ENCODE measurements at regions of chr11 and their contacts with region 1.

Region 1: GRCh38 chr11:72722050-72722748 is 30.0 kb downstream of the ARAP1 start:
- DNase-seq: peak; percentile 76 to 91
- ATAC-seq: peak; percentile 82 to 84
- H3K4me3 ChIP-seq: peak overlapping the region; percentile 58 to 75 (median 70)
- H3K27ac ChIP-seq: peak overlapping the region; percentile 88 to 97 (median 90)
- H3K4me1 ChIP-seq: peaks cover 45 to 48% of the 10 kb centered on the region in 2 donors
- H3K27me3 ChIP-seq: no peaks in the 10 kb centered on the region
- CTCF ChIP-seq: no peak
- POLR2A ChIP-seq: peak; percentile 48 to 61

Region 2: GRCh38 chr11:72781313-72782050 is 59.3 kb after region 1 on chr11:
- in situ Hi-C with region 1: loop called in 2 of 4 experiments (anchors 5 to 10 kb)
- intact Hi-C with region 1: no loop called
- DNase-seq: no peak
- ATAC-seq: peak; percentile 59 to 63
- H3K4me3 ChIP-seq: peak overlapping the region; percentile 69 to 92 (median 78)
- H3K27ac ChIP-seq: peak overlapping the region in 3 of 4 donors; percentile 48 to 63 (median 52)
- H3K4me1 ChIP-seq: peaks cover 19 to 25% of the 10 kb centered on the region in 2 donors
- H3K27me3 ChIP-seq: no peaks in the 10 kb centered on the region
- CTCF ChIP-seq: no peak
- POLR2A ChIP-seq: no peak

Region 3: DNA sequence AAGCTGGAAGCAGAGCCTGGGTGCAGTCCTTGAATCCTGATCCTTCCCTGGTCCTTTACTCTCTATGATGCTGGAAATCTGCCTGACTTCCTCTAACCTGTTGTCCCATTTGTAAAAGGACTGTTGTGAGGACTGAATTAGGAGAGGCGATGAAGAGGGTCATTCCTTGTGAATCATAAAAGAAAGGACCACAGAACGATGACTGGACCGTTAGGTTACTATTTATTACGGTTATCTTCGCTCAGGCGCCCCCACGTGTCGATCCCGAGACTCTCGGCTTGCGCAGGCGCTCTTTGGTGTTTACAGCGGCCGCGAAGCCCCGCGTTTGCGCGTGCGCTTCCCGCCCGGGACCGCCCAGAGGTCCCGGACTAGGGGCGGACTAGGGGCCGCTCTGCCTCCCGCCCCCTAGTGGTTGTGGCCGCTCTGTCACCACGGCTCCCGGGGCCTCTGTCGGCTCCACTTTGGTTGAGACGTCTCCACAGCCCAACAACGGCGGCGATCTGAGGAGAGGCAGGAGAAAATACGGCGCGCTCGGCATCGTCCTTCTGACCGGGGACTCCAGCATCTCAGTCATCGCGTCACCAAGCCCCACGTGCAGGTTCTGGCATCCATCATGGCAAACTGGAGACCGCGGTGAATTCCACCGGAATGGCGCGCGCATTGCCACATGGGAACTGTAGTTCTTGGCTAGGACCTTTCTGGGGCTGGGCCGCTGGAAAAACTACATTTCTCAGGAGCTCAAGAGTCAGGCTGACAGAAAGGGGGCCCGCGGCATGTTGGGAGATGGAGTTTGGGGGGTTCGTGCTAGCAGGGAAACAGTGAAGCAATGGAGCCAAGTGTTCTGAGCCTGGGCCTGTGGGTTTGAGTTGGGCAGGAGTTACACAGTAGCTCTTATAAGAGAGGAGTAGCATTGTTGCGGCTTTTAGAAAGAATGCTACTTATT is 71.5 kb after region 1 on chr11 and contains the start of gene STARD10:
- in situ Hi-C with region 1: loop called in 3 of 4 experiments (anchors 5 to 10 kb)
- intact Hi-C with region 1: loop called (anchors 1 kb)
- DNase-seq: peak; percentile 89 to 92
- ATAC-seq: peak; percentile 92 to 93
- H3K4me3 ChIP-seq: peak within 1 kb of the TSS; percentile 64 to 86 (median 75)
- H3K27ac ChIP-seq: peak within 1 kb of the TSS; percentile 87 to 98 (median 96)
- H3K4me1 ChIP-seq: peaks cover 20 to 29% of the 10 kb centered on the region in 2 donors
- H3K27me3 ChIP-seq: no peaks in the 10 kb centered on the region
- CTCF ChIP-seq: peak; percentile 98 to 100 (median 99)
- POLR2A ChIP-seq: peak in 1 of 2 donors; percentile 69
- total RNA-seq, gene STARD10: 39.1 to 103 (median 71.1) TPM

Region 4: GRCh38 chr11:72814286-72815109 is 92.3 kb after region 1 on chr11 and contains the start of gene ATG16L2:
- in situ Hi-C with region 1: no loop called
- intact Hi-C with region 1: loop called (anchors 2 kb)
- DNase-seq: peak; percentile 71 to 78
- ATAC-seq: peak; percentile 88 to 90
- H3K4me3 ChIP-seq: peak within 1 kb of the TSS; percentile 75 to 100 (median 94)
- H3K27ac ChIP-seq: peak within 1 kb of the TSS; percentile 88 to 100 (median 94)
- H3K4me1 ChIP-seq: peaks cover 13 to 26% of the 10 kb centered on the region in 2 donors
- H3K27me3 ChIP-seq: no peaks in the 10 kb centered on the region
- CTCF ChIP-seq: peak; percentile 7 to 69 (median 33)
- POLR2A ChIP-seq: peak; percentile 65 to 70
- total RNA-seq, gene ATG16L2: 3.1 to 8.1 (median 4.3) TPM

Region 5: GRCh38 chr11:73177778-73178577 is 455.8 kb after region 1 on chr11:
- in situ Hi-C with region 1: loop called in 2 of 4 experiments (anchors 10 to 25 kb)
- intact Hi-C with region 1: loop called (anchors 2 kb)
- DNase-seq: peak; percentile 56 to 72
- ATAC-seq: peak; percentile 64 to 71
- H3K4me3 ChIP-seq: no peak overlapping the region
- H3K27ac ChIP-seq: peak overlapping the region; percentile 29 to 63 (median 46)
- H3K4me1 ChIP-seq: peaks cover 16 to 25% of the 10 kb centered on the region in 2 donors
- H3K27me3 ChIP-seq: no peaks in the 10 kb centered on the region
- CTCF ChIP-seq: peak; percentile 80 to 92 (median 89)
- POLR2A ChIP-seq: no peak

Region 6: DNA sequence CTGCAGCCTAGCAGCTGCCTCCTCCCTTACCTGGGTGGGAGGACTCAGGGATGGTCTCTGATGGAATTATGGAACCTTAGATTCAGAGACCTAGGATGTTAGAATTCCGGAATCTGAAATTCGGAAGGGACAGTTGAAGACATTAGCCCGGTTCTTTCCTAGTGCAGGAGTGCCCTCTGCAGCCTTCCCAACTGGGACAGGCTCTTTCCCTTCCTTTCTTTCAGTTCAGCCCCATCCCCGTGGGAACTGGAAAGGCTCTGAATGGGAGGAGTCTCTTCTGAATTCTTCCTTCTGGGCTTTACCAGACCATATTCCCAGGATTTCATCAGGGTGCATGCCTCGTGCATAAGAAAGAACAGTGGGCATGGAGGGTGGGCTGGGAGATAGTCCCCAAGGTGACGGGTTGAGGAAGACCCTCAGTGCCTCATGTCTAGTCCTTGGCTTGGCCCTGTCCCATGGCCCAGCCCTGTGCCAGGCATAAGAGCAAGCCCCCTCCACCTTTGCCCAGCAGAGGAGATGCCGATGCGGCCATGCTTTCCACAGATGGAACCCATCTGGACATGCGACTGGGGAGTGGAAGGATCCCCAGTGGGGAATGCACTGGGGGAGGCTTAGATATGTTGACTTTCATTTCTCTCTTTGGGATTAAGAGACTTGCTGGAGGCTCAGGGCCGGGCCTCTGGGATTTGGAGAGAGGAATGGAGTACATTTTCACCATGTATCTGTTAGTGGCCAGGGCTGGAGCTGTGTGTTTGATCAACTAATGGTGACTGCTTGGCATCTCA is 1243.1 kb after region 1 on chr11:
- in situ Hi-C with region 1: no loop called
- intact Hi-C with region 1: no loop called
- DNase-seq: no peak
- ATAC-seq: no peak
- H3K4me3 ChIP-seq: no peak overlapping the region
- H3K27ac ChIP-seq: no peak overlapping the region
- H3K4me1 ChIP-seq: peaks cover 7 to 17% of the 10 kb centered on the region in 2 donors
- H3K27me3 ChIP-seq: no peaks in the 10 kb centered on the region
- CTCF ChIP-seq: no peak
- POLR2A ChIP-seq: no peak